Activated T-helper 2 cell treated with anti-CD3 and anti-CD28 coated beads, Interferon-gamma antibody, Interleukin-2, Interleukin-4, amounts not matched to agents 10 μg/mL and 5 μg/mL and 100 μg/mL, durations not matched to agents 14 hours and 24 hours and 36 hours (primary cell): ENCODE measurements at regions of chr12 and their contacts with region 1.

Region 1: GRCh38 chr12:14769969-14770495 is 33.2 kb downstream of the WBP11 start:
- DNase-seq: peak; percentile 78
- H3K4me3 Mint-ChIP-seq: peak overlapping the region; percentile 95
- H3K27ac Mint-ChIP-seq: peak overlapping the region; percentile 98
- H3K4me1 Mint-ChIP-seq: peaks cover 47% of the 10 kb centered on the region
- H3K27me3 Mint-ChIP-seq: no peaks in the 10 kb centered on the region

Region 2: DNA sequence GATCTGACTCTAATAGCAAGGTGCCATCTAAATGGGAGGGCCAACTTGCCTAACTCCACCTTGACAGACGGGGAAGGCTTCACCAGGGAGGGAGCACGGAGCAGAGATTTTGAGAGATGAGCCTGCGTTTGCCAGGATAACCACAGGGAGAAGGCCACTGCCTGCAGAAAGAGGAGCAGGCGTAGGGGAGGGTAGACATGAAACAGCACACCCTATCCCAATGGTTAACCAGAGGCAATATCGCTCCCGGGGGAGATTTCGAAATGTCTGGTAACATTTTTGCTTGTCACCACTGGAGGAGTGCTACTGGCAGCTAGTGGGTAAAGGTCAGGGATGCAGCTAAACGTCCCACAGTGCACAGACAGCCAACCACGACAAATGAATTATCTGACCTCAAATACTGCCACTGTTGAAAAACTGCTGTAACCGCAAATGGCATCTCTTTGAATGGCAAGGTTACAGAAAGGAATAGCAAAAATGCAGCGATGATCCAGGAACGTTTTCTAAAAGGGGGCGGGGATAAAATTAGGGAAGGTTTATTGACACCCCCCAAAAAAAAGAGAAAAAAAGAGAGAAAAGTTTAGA is 530.6 kb before region 1 on chr12:
- intact Hi-C with region 1: loop called (anchors 5 kb)
- DNase-seq: no peak
- H3K4me3 Mint-ChIP-seq: peak overlapping the region; percentile 73
- H3K27ac Mint-ChIP-seq: peak overlapping the region; percentile 86
- H3K4me1 Mint-ChIP-seq: peaks cover 25% of the 10 kb centered on the region
- H3K27me3 Mint-ChIP-seq: no peaks in the 10 kb centered on the region

Region 3: DNA sequence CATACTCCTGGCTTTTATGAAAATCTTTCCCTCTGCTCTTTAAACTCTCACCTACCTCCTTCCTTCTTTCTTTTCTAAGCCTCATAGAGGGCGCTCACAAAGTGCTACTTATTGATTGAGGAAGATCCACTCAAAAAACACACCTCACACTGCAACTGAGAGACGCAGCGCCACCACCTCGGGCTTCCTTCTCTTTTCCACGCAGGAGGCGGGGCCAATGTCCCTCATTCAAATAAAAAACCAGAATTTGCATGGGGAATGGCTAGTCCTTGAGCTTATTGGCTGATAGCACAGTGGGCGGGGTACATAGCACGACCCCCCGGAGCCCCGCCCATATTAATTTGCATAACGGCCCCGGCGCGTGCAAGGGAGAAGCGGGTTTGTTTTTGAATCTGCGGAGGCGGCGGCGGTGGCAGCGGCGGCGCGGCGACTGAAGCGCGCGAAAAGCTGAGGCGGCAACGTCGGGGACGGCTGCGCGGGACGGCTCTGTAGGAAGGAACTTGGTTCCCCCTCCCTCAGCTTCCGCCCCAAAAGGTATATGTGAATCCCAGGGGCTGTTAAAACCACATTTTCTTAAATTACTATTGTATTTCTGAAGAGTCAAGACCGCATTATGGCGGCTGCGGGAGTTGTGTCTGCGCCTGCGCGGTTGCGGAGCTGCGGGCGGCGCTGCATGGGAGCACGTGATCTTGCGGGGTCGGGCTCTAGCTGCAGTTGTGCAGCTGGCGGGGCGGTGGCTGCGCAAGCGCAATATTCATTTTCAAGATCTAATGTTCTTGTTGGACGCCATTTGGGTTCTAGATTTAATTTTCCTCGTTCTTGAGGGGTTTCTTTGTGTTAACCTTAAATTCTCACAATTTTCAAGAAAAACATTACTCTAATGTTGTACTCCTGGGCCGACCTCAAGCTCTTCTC is 404.5 kb before region 1 on chr12 and contains the start of gene ATF7IP:
- intact Hi-C with region 1: loop called (anchors 1 kb)
- DNase-seq: peak; percentile 96
- H3K4me3 Mint-ChIP-seq: peak within 1 kb of the TSS; percentile 88
- H3K27ac Mint-ChIP-seq: peak within 1 kb of the TSS; percentile 96
- H3K4me1 Mint-ChIP-seq: peaks cover 32% of the 10 kb centered on the region
- H3K27me3 Mint-ChIP-seq: no peaks in the 10 kb centered on the region
- total RNA-seq, gene ATF7IP: 81.2 and 82.1 TPM in 2 replicates

Region 4: DNA sequence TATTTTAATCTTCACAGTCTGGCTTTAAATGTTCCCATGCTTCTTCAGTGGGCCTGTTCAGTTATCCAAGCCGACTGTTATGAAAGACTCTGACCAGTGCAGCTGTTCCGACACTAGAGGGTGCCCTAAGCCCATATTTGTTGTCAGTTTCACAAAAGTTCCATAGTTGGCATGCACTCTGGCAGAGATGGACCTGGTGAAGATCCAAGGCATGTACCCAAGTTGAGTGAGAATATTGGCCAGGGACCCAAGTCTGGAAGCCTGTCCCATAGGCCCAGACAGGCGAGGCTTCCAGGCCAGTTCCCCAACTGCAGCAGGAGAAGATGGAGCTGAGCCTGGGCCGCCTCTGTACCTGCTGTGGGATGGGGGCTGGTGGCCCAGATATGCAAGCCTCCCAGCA is 46.3 kb before region 1 on chr12:
- intact Hi-C with region 1: loop called (anchors 2 kb)
- DNase-seq: peak; percentile 22
- H3K4me3 Mint-ChIP-seq: no peak overlapping the region
- H3K27ac Mint-ChIP-seq: no peak overlapping the region
- H3K4me1 Mint-ChIP-seq: peaks cover 2% of the 10 kb centered on the region
- H3K27me3 Mint-ChIP-seq: peaks cover 17% of the 10 kb centered on the region

Region 5: GRCh38 chr12:14948672-14949071 is 178.6 kb after region 1 on chr12:
- intact Hi-C with region 1: loop called (anchors 1 kb)
- DNase-seq: peak; percentile 62
- H3K4me3 Mint-ChIP-seq: peak overlapping the region; percentile 73
- H3K27ac Mint-ChIP-seq: peak overlapping the region; percentile 98
- H3K4me1 Mint-ChIP-seq: peaks cover 71% of the 10 kb centered on the region
- H3K27me3 Mint-ChIP-seq: no peaks in the 10 kb centered on the region

Region 6: GRCh38 chr12:15563663-15564062 is 793.6 kb after region 1 on chr12:
- intact Hi-C with region 1: loop called (anchors 5 kb)
- DNase-seq: no peak
- H3K4me3 Mint-ChIP-seq: peak overlapping the region; percentile 83
- H3K27ac Mint-ChIP-seq: peak overlapping the region; percentile 91
- H3K4me1 Mint-ChIP-seq: peaks cover 65% of the 10 kb centered on the region
- H3K27me3 Mint-ChIP-seq: no peaks in the 10 kb centered on the region